ENCODE measurements at regions of chr3 and their contacts with region 1.

Region 1: GRCh38 chr3:45607790-45608189 is 13.2 kb downstream of the LIMD1 start:
- DNase-seq: no peak
- ATAC-seq: peak; percentile 52 to 65 (median 54)
- H3K4me3 ChIP-seq: peak overlapping the region; percentile 24
- H3K27ac ChIP-seq: peak overlapping the region; percentile 83
- H3K4me1 ChIP-seq: peaks cover 99% of the 10 kb centered on the region
- H3K27me3 ChIP-seq: no peaks in the 10 kb centered on the region
- CTCF ChIP-seq: no peak

Region 2: GRCh38 chr3:45210308-45211041 is 397.3 kb before region 1 on chr3:
- intact Hi-C with region 1: no loop called
- DNase-seq: peak; percentile 86 to 93
- ATAC-seq: peak; percentile 98 to 100 (median 99)
- H3K4me3 ChIP-seq: no peak overlapping the region
- H3K27ac ChIP-seq: no peak overlapping the region
- H3K4me1 ChIP-seq: peaks cover 7% of the 10 kb centered on the region
- H3K27me3 ChIP-seq: no peaks in the 10 kb centered on the region
- CTCF ChIP-seq: peak; percentile 74

Region 3: GRCh38 chr3:45546716-45547701 is 60.8 kb before region 1 on chr3:
- intact Hi-C with region 1: no loop called
- DNase-seq: peak in 1 of 2 donors; percentile 45
- ATAC-seq: peak in 1 of 4 donors; percentile 25
- H3K4me3 ChIP-seq: no peak overlapping the region
- H3K27ac ChIP-seq: peak overlapping the region; percentile 63
- H3K4me1 ChIP-seq: peaks cover 67% of the 10 kb centered on the region
- H3K27me3 ChIP-seq: no peaks in the 10 kb centered on the region
- CTCF ChIP-seq: peak; percentile 24

Region 4: DNA sequence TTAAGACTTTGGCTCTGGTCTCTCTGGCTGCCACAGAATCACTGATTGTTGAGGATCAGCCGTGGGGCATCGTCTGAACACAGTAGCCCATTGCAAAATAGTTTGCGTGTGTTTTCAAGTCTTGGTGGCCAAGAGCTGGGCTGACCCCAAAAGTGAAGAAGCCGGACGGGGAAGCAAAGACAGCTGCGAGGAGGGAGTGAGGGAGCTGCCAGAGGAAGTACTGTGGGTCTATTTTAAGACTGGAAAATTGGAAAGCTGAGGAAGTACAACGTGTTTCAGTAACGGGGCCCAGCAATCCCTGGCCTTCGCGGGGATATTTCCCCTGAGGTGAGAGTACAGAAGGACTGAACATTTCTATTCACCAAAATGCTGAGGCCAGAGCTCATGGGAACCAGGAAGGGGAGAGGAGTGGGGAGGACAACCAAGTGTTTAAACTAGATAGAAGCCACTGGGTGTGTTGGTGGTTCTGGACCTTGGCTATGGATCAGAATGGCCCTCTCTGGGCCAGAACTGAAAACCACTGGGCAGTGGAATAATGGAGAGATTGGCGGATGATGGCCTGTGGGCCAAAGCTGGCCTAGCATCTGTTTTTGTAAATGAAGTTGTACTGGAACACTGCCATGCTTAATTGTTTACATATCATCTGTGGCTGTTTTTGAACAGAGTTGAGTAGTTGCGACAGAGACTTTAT is 47.4 kb before region 1 on chr3:
- intact Hi-C with region 1: loop called in 1 of 2 experiments (anchors 5 kb)
- DNase-seq: peak; percentile 86 to 93
- ATAC-seq: peak; percentile 93 to 95 (median 94)
- H3K4me3 ChIP-seq: peak overlapping the region; percentile 2
- H3K27ac ChIP-seq: peak overlapping the region; percentile 89
- H3K4me1 ChIP-seq: peaks cover 39% of the 10 kb centered on the region
- H3K27me3 ChIP-seq: no peaks in the 10 kb centered on the region
- CTCF ChIP-seq: no peak

Region 5: DNA sequence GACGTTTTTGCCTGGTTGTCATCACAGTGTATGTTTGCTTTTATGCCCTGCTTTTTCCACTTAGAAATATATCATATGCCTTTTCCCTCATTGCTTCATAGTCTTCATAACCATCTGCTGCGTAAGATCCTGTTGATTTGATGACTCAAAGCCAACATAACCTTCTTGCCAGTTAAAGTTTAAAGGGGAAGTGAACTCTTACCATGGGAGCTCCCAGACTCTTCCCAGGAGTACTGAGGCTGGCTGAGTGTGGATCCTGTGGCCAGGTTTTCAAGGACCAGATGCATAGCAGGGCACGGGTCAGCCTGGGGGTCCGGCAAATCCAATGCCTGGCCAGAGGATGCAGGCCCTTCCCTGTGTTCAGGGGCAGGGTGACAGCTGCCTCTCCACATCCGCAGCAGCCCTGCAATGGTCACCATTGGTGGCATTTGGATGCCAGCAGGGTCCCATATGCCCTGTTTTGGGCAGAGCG is 39.4 kb after region 1 on chr3:
- intact Hi-C with region 1: loop called in 1 of 2 experiments (anchors 5 kb)
- DNase-seq: no peak
- ATAC-seq: peak; percentile 85 to 93 (median 87)
- H3K4me3 ChIP-seq: no peak overlapping the region
- H3K27ac ChIP-seq: peak overlapping the region; percentile 87
- H3K4me1 ChIP-seq: peaks cover 54% of the 10 kb centered on the region
- H3K27me3 ChIP-seq: no peaks in the 10 kb centered on the region
- CTCF ChIP-seq: no peak

Region 6: GRCh38 chr3:45659661-45660559 is 52.1 kb after region 1 on chr3:
- intact Hi-C with region 1: no loop called
- DNase-seq: peak; percentile 65 to 82
- ATAC-seq: peak; percentile 56 to 71 (median 62)
- H3K4me3 ChIP-seq: no peak overlapping the region
- H3K27ac ChIP-seq: no peak overlapping the region
- H3K4me1 ChIP-seq: peaks cover 38% of the 10 kb centered on the region
- H3K27me3 ChIP-seq: no peaks in the 10 kb centered on the region
- CTCF ChIP-seq: peak; percentile 94